Caco-2 (cell line): ENCODE measurements at regions of chr11 and their contacts with region 1.

Region 1: DNA sequence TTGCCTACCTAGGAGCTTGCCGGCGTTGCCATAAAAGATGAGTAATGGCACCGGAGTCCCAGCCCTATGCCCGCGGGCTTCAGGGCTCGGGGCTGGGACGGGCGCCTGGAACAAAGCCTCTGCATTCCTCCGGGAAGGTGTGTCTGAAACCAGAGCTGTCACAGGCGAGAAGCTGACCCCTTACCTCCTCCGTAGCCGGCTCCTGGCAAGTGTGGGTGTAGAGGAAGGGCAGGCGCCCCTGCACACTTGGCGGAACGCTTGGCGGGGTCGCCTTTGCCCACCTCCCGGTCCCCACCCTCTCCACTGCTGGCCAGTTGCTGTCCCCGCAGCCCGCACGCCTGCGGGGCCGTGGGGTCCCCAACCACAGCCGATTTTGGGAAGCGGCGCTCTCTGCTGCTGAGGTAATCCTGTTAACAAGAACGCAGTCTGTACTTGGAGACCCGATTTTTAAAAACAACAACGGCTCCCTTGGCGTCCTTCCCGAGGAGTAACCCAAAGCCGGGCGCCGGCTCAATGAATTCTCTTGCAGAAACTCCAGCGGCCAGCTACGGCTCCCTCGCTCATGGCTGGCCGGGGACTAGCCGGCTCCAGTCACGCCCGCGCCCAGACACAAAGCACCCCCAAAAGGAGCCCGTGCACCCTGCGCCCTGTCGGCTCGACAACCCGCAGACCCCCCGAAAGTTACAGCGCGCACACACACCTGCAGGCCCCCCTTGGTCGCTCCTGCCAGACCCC is 89.2 kb downstream of the PLEKHA7 start:
- DNase-seq: peak; percentile 95 to 96
- H3K4me3 ChIP-seq: peak overlapping the region; percentile 83
- H3K4me3 Mint-ChIP-seq: peak overlapping the region; percentile 95
- H3K27ac Mint-ChIP-seq: peak overlapping the region; percentile 92
- H3K4me1 ChIP-seq: peaks cover 35% of the 10 kb centered on the region
- H3K4me1 Mint-ChIP-seq: peaks cover 46% of the 10 kb centered on the region
- H3K27me3 ChIP-seq: no peaks in the 10 kb centered on the region
- H3K27me3 Mint-ChIP-seq: no peaks in the 10 kb centered on the region
- CTCF ChIP-seq: no peak

Region 2: GRCh38 chr11:16862746-16863145 is 62.2 kb before region 1 on chr11:
- CTCF ChIA-PET with region 1: no interaction called
- POLR2A ChIA-PET with region 1: interaction called, 3 read pairs
- intact Hi-C with region 1: loop called (anchors 2 kb)
- DNase-seq: peak in 1 of 2 experiments; percentile 30
- H3K4me3 ChIP-seq: no peak overlapping the region
- H3K4me3 Mint-ChIP-seq: no peak overlapping the region
- H3K27ac Mint-ChIP-seq: peak overlapping the region; percentile 67
- H3K4me1 ChIP-seq: peaks cover 55% of the 10 kb centered on the region
- H3K4me1 Mint-ChIP-seq: peaks cover 53% of the 10 kb centered on the region
- H3K27me3 ChIP-seq: no peaks in the 10 kb centered on the region
- H3K27me3 Mint-ChIP-seq: no peaks in the 10 kb centered on the region
- CTCF ChIP-seq: no peak

Region 3: GRCh38 chr11:16902781-16903378 is 22.1 kb before region 1 on chr11:
- CTCF ChIA-PET with region 1: no interaction called
- POLR2A ChIA-PET with region 1: no interaction called
- intact Hi-C with region 1: loop called (anchors 1 kb)
- DNase-seq: no peak
- H3K4me3 ChIP-seq: no peak overlapping the region
- H3K4me3 Mint-ChIP-seq: no peak overlapping the region
- H3K27ac Mint-ChIP-seq: no peak overlapping the region
- H3K4me1 ChIP-seq: peaks cover 39% of the 10 kb centered on the region
- H3K4me1 Mint-ChIP-seq: peaks cover 41% of the 10 kb centered on the region
- H3K27me3 ChIP-seq: no peaks in the 10 kb centered on the region
- H3K27me3 Mint-ChIP-seq: no peaks in the 10 kb centered on the region
- CTCF ChIP-seq: no peak

Region 4: GRCh38 chr11:17077520-17078401 is 152.8 kb after region 1 on chr11 and contains the start of gene RPS13:
- CTCF ChIA-PET with region 1: no interaction called
- POLR2A ChIA-PET with region 1: interaction called, 10 read pairs
- intact Hi-C with region 1: no loop called
- DNase-seq: peak; percentile 97 to 99
- H3K4me3 ChIP-seq: peak within 1 kb of the TSS; percentile 84
- H3K4me3 Mint-ChIP-seq: peak within 1 kb of the TSS; percentile 96
- H3K27ac Mint-ChIP-seq: peak within 1 kb of the TSS; percentile 99
- H3K4me1 ChIP-seq: peaks cover 24% of the 10 kb centered on the region
- H3K4me1 Mint-ChIP-seq: peaks cover 7% of the 10 kb centered on the region
- H3K27me3 ChIP-seq: no peaks in the 10 kb centered on the region
- H3K27me3 Mint-ChIP-seq: no peaks in the 10 kb centered on the region
- CTCF ChIP-seq: no peak
- total RNA-seq, gene RPS13: 1,349 and 1,456 TPM in 2 replicates